CD4-positive, alpha-beta memory T cell (primary cell): ENCODE measurements at regions of chr13 and their contacts with region 1.

Region 1: DNA sequence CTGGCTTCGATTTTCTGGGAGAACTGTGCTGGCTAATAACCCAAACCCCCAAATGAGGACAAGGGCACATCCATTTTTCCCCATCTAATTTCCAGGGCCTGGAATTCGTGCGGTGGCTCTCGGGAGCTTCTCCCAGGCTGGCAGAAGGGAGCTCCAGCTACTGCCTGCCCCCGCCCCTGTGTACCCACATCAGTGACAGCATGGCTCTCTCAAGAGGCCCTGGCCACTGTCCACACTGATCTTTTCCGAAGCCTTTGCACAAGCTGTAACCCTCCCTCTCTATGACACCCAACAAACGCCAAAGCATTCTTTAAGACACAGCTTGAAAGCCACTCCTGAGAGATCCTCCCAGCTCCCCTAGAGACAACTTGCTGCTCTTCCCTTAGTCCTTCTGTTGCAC is 73.1 kb downstream of the ZIC5 start:
- DNase-seq: no peak
- H3K4me3 ChIP-seq: no peak overlapping the region
- H3K4me3 Mint-ChIP-seq: peak overlapping the region in 2 of 8 donors; percentile 7 to 32
- H3K27ac ChIP-seq: no peak overlapping the region
- H3K27ac Mint-ChIP-seq: peak overlapping the region in 1 of 7 donors; percentile 24
- H3K4me1 ChIP-seq: no peaks in the 10 kb centered on the region
- H3K4me1 Mint-ChIP-seq: peaks cover 9 to 22% (median 13%) of the 10 kb centered on the region in 4 donors
- H3K27me3 ChIP-seq: peaks cover 19% of the 10 kb centered on the region
- H3K27me3 Mint-ChIP-seq: peaks cover 48 to 50% of the 10 kb centered on the region in 2 donors

Region 2: DNA sequence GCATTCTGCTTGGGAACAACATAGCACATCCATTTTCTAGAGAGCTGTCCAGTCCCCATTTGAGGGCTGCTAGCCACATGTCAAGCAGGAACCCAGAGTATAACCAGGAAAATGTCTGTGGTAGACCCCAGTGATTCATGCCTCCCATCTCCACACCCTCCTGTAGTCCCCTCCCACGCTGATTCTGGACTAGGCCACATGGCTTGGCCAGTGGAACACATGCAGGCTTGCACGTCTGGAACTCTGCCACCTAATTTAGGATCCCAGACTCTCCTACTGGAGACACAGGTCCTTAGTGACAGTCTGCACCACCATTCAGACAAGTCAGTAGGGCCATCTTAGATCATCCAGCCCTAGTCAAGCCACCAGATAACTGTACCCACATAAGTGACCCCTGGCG is 76.7 kb before region 1 on chr13:
- CTCF ChIA-PET with region 1: interaction called, 8 read pairs
- POLR2A ChIA-PET with region 1: interaction called, 3 read pairs
- intact Hi-C with region 1: loop called (anchors 5 kb)
- DNase-seq: no peak
- H3K4me3 ChIP-seq: no peak overlapping the region
- H3K4me3 Mint-ChIP-seq: no peak overlapping the region
- H3K27ac ChIP-seq: no peak overlapping the region
- H3K27ac Mint-ChIP-seq: no peak overlapping the region
- H3K4me1 ChIP-seq: peaks cover 17% of the 10 kb centered on the region
- H3K4me1 Mint-ChIP-seq: peaks cover 15 to 26% (median 20%) of the 10 kb centered on the region in 4 donors
- H3K27me3 ChIP-seq: no peaks in the 10 kb centered on the region
- H3K27me3 Mint-ChIP-seq: no peaks in the 10 kb centered on the region

Region 3: GRCh38 chr13:99886706-99887105 is 11.7 kb before region 1 on chr13:
- CTCF ChIA-PET with region 1: interaction called, 15 read pairs
- POLR2A ChIA-PET with region 1: no interaction called
- intact Hi-C with region 1: no loop called
- DNase-seq: no peak
- H3K4me3 ChIP-seq: no peak overlapping the region
- H3K4me3 Mint-ChIP-seq: no peak overlapping the region
- H3K27ac ChIP-seq: no peak overlapping the region
- H3K27ac Mint-ChIP-seq: peak overlapping the region in 1 of 7 donors; percentile 7
- H3K4me1 ChIP-seq: no peaks in the 10 kb centered on the region
- H3K4me1 Mint-ChIP-seq: no peaks in the 10 kb centered on the region
- H3K27me3 ChIP-seq: no peaks in the 10 kb centered on the region
- H3K27me3 Mint-ChIP-seq: no peaks in the 10 kb centered on the region

Region 4: GRCh38 chr13:99916366-99917103 is 18.1 kb after region 1 on chr13:
- CTCF ChIA-PET with region 1: interaction called, 60 read pairs
- POLR2A ChIA-PET with region 1: no interaction called
- intact Hi-C with region 1: no loop called
- DNase-seq: peak; percentile 45 to 52 (median 49)
- H3K4me3 ChIP-seq: no peak overlapping the region
- H3K4me3 Mint-ChIP-seq: no peak overlapping the region
- H3K27ac ChIP-seq: no peak overlapping the region
- H3K27ac Mint-ChIP-seq: no peak overlapping the region
- H3K4me1 ChIP-seq: peaks cover 24% of the 10 kb centered on the region
- H3K4me1 Mint-ChIP-seq: peaks cover 12 to 21% (median 18%) of the 10 kb centered on the region in 4 donors
- H3K27me3 ChIP-seq: no peaks in the 10 kb centered on the region
- H3K27me3 Mint-ChIP-seq: peaks cover 0 to 2% of the 10 kb centered on the region in 2 donors